Activated CD4-positive, alpha-beta T cell treated with anti-CD3 and anti-CD28 coated beads for 36 hours (primary cell): ENCODE measurements at regions of chr1 and their contacts with region 1.

Region 1: DNA sequence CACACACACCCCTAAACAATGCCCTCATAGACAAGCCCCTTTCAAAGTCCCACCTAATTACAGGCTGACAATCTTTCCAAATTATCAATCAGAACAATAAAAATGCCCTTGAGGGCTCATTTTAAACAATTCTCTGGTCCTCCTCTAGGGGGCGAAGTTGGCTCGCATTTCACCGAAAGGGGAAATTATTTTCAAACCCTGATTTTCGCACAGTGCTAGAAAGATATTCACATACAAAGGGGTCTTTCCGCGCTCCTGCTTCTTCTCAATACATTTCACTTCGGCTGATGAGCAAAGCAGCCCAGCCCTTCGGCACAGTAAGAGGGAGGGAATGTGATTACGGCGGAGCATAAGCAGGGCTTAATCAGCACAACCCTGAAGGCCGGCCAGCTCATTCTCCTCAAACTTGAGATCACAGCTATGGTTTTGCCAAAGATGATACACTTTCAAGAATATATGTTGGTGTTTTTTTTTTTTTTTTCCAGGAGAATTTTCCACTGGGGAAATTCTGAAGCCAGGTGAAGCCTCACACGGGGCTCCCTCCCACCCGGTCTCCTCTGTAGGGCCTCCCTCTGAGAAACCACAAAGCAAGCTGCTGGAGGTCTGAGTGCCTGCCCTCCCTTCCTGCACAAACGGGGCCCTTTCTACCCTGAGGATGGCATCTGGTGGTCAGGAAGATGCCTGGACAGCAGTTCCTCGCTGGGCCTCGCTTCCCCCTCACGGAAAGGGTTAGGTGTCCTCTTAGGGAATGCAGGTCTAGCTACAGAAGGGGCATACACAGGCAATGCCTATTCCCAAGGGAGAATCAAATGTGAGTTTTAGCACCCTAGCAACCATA is 66.9 kb downstream of the GNG12 start:
- DNase-seq: peak; percentile 64
- ATAC-seq: peak; percentile 46
- H3K4me3 Mint-ChIP-seq: no peak overlapping the region
- H3K27ac Mint-ChIP-seq: no peak overlapping the region
- H3K4me1 Mint-ChIP-seq: peaks cover 12% of the 10 kb centered on the region
- H3K27me3 Mint-ChIP-seq: peaks cover 29% of the 10 kb centered on the region

Region 2: DNA sequence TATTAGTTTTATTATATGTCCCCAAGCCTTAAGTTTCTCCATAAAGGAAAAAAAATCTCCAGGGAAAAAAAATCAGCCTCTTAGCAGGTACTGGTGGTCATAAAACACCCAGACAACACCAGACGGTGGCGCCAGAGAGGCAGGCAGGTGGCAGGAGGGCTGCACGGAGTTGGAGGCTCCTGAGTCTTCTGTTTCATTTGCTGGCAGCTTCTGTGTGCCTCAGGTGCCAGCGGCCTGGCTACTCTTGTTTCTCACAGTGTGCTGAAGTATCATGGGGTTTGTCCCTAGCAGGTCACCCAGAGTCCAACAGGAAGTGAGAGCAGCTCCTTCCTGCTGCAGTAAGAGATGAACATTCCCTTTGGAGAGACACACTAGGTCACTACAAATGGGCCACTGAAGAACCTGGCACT is 204.7 kb before region 1 on chr1:
- CTCF ChIA-PET with region 1: interaction called, 161 read pairs
- POLR2A ChIA-PET with region 1: no interaction called
- intact Hi-C with region 1: no loop called
- DNase-seq: peak; percentile 95
- ATAC-seq: peak; percentile 91
- H3K4me3 Mint-ChIP-seq: no peak overlapping the region
- H3K27ac Mint-ChIP-seq: no peak overlapping the region
- H3K4me1 Mint-ChIP-seq: peaks cover 5% of the 10 kb centered on the region
- H3K27me3 Mint-ChIP-seq: peaks cover 4% of the 10 kb centered on the region

Region 3: DNA sequence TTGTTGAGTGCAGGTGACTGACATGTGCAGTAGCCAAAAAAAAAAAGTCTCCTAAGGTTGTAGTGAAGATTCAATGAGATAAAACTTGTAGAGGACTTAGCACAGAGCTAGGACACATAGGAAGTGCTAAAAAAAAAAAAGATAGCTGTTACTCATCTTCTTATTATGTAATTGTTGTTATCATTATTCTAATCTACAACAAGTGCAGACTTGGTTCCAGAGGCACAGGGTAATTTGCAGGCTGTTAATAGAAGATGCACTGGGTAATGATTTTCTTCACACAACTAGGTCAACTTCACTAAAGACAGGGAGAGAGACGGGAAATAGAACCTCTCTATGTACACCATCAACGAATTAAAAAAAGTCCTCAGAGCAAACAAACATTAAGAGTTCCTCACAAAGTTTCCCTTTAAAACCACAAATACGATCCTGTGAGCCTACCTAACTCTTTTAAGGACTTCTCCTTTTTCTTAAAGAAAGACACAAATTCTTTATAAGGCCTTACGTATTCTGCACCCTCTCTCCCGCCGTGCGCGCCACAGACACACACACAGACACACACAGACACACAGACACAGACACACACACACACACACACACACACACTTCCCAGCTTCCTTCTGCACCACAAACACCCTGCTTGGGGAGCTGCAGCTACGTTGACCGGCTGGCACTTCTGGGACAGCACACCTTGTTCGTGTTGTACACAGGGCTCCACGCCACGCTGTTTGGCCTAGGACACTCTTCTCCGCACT is 131.1 kb before region 1 on chr1:
- CTCF ChIA-PET with region 1: no interaction called
- POLR2A ChIA-PET with region 1: no interaction called
- intact Hi-C with region 1: no loop called
- DNase-seq: no peak
- ATAC-seq: no peak
- H3K4me3 Mint-ChIP-seq: no peak overlapping the region
- H3K27ac Mint-ChIP-seq: no peak overlapping the region
- H3K4me1 Mint-ChIP-seq: peaks cover 16% of the 10 kb centered on the region
- H3K27me3 Mint-ChIP-seq: no peaks in the 10 kb centered on the region

Region 4: GRCh38 chr1:67696708-67697107 is 69.7 kb before region 1 on chr1:
- CTCF ChIA-PET with region 1: no interaction called
- POLR2A ChIA-PET with region 1: no interaction called
- intact Hi-C with region 1: no loop called
- DNase-seq: no peak
- ATAC-seq: no peak
- H3K4me3 Mint-ChIP-seq: no peak overlapping the region
- H3K27ac Mint-ChIP-seq: no peak overlapping the region
- H3K4me1 Mint-ChIP-seq: peaks cover 12% of the 10 kb centered on the region
- H3K27me3 Mint-ChIP-seq: no peaks in the 10 kb centered on the region

Region 5: DNA sequence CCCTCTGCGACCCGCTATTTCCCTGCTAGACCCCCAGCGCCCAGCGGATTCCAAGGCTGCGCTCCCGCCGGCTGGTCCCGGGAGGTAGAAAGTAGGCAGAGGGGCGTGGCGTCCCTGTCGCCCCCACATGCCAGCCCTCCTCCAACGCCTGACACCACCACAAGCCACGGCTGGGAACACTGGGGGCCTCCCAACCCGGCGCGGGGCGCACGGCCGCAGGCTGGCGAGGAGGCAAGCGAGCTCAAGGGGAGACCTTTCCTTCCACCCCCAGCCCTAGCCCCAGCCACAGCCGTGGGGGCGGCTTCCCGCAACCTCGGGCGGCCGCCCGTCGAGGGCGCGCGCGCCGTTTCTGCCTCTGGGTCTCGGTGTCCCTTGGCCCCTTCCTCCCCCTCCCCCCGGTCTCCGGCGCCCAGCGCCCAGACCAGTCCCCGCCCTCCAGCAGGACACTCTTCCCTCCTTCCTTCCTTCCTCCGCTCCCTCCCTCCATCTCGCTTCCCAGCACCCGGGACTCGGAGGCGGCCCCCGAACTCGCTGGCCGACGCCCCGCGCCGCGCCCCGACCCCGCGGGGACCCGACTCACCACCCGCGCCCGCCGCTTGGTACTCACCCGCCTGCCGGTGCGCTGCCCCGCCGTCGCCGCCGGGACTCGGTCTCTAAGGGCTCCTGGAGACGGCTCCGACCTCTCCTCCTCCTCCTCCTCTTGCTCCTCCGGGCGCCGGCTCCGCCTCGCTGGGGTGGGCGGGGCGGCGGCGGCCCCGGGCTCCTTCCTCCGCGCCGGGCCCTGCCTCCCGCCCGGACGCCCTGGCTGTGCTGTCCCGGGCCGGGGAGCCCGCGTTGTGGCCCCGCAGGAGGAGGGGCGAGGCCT is 66.6 kb after region 1 on chr1 and contains the start of gene GNG12:
- CTCF ChIA-PET with region 1: interaction called, 3 read pairs
- POLR2A ChIA-PET with region 1: no interaction called
- intact Hi-C with region 1: loop called (anchors 5 kb)
- DNase-seq: peak; percentile 59
- ATAC-seq: peak; percentile 86
- H3K4me3 Mint-ChIP-seq: peak within 1 kb of the TSS; percentile 59
- H3K27ac Mint-ChIP-seq: no peak within 1 kb of the TSS
- H3K4me1 Mint-ChIP-seq: peaks cover 10% of the 10 kb centered on the region
- H3K27me3 Mint-ChIP-seq: peaks cover 49% of the 10 kb centered on the region
- total RNA-seq, gene GNG12: 0.07 to 0.11 TPM

Region 6: DNA sequence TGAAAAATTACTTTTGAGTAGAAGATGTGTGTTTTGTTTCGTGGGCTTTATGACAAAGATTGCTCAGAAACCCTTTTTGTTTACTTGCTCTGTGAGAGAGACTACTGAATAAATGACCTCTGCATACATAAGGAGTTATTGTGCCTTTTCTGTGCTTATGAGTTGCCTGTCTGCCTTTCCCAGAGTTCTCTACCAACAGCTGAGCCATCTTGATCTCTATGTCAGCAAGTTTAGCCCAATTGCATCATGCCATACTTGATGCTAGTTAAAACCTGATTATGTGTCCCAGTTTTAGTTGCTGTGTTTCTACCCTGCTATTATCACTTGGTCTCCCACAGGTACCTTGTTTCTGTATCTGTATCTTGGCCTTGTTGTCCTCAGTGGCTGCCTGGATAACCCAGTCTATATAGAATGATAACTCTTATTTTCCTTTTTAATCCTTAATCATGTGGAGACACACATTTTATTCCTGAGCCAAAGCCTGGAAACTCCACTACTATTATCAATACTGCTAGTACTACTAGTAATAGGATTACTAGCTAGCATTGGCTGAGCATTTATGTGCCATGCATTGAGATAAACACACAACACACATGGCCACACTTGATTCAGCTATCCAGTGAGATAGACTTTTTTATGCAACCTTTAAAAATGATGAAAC is 95.6 kb after region 1 on chr1:
- CTCF ChIA-PET with region 1: no interaction called
- POLR2A ChIA-PET with region 1: no interaction called
- intact Hi-C with region 1: no loop called
- DNase-seq: no peak
- ATAC-seq: no peak
- H3K4me3 Mint-ChIP-seq: no peak overlapping the region
- H3K27ac Mint-ChIP-seq: no peak overlapping the region
- H3K4me1 Mint-ChIP-seq: no peaks in the 10 kb centered on the region
- H3K27me3 Mint-ChIP-seq: peaks cover 30% of the 10 kb centered on the region

Region 7: GRCh38 chr1:68120136-68120791 is 353.9 kb after region 1 on chr1:
- CTCF ChIA-PET with region 1: interaction called, 4 read pairs
- POLR2A ChIA-PET with region 1: no interaction called
- intact Hi-C with region 1: loop called in 1 of 2 experiments (anchors 5 kb)
- DNase-seq: peak; percentile 45
- ATAC-seq: peak; percentile 30
- H3K4me3 Mint-ChIP-seq: no peak overlapping the region
- H3K27ac Mint-ChIP-seq: no peak overlapping the region
- H3K4me1 Mint-ChIP-seq: peaks cover 4% of the 10 kb centered on the region
- H3K27me3 Mint-ChIP-seq: peaks cover 1% of the 10 kb centered on the region